HepG2 (cell line): ENCODE measurements at regions of chr11 and their contacts with region 1.

Region 1: DNA sequence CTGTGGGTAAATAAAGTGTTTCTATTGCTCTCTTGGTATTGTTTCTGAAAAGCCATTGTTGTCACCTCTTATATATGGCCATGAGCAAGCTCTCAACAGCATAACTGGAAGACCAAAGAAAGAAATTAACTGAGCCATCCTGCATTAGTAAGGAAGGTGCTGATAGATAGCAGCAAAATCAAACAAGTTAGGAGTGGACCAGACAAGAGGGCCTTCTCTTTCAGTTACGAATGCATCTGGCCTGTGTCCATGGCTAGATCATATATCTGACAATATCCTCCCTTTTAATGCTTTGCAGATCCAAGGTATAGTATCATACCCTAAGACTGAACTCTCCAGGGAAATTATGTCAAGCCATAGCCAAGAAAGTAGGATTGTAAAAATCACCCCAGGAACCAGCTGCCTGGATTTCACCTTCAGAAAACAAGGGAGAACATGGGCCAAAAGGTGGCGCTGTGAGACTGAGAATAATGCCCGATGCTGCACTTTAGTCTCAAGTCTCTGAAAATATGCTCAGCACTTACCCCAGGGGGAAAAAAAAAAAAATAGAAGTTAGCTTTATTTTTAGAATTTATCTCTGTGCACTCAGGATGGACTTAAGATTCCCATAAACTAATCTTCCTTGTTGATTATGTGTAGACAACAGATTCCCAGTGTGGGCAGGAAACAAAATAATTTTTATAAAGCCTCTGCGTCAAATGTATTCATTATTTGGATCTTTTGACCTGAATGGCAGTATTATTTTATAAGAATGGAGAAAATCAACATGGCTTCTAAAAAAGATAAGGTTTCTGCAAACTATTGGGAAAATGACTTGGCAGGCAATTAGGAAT is 415.1 kb downstream of the ETS1 start:
- DNase-seq: peak; percentile 46
- ATAC-seq: peak; percentile 80
- H3K4me3 ChIP-seq: no peak overlapping the region
- H3K27ac ChIP-seq: no peak overlapping the region
- H3K4me1 ChIP-seq: no peaks in the 10 kb centered on the region
- H3K27me3 ChIP-seq: no peaks in the 10 kb centered on the region
- CTCF ChIP-seq: peak; percentile 79
- EP300 ChIP-seq: no peak
- POLR2A ChIP-seq: no peak
- RAD21 ChIP-seq: peak; percentile 41; the same call in 1 of the 2 replicates

Region 2: DNA sequence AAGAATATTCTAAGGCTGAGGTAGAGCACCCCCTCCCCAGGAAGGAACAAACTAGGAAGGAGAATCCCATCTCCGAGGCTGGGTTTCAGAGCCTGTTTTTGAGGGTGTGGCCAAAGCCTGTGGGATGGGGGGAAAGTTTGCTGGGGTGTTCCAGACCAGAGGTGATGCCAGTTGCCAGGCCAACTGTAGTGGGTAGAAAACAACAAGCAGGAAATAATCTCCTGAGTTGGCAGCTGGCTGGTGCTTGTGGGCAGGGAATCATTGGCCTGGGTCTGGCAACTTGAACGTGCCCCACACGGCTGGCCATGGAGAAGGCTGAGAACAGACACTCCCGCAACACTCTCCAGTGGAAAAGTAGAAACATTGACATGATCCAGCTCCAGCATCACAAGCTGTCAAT is 29.5 kb after region 1 on chr11:
- CTCF ChIA-PET with region 1: no interaction called
- POLR2A ChIA-PET with region 1: no interaction called
- in situ Hi-C with region 1: no loop called
- intact Hi-C with region 1: no loop called
- DNase-seq: no peak
- ATAC-seq: no peak
- H3K4me3 ChIP-seq: no peak overlapping the region
- H3K27ac ChIP-seq: no peak overlapping the region
- H3K4me1 ChIP-seq: no peaks in the 10 kb centered on the region
- H3K27me3 ChIP-seq: no peaks in the 10 kb centered on the region
- CTCF ChIP-seq: no peak
- EP300 ChIP-seq: no peak
- POLR2A ChIP-seq: no peak
- RAD21 ChIP-seq: no peak

Region 3: DNA sequence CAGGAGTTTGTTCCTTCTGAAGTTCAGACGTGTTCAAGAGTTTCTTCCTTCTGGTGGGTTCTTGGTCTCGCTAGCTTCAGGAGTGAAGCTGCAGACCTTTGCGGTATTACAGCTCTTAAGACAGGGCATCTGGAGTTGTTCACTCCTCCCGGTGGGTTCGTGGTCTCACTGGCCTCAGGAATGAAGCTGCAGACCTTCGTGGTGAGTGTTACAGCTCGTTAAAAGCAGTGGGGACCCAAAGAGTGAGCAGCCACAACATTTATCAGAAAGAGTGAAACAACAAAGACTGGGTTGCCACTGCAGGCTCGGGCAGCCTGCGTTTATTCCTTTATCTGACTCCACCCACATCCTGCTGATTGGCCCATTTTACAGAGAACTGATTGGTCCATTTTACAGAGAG is 42.0 kb after region 1 on chr11:
- CTCF ChIA-PET with region 1: no interaction called
- POLR2A ChIA-PET with region 1: no interaction called
- in situ Hi-C with region 1: no loop called
- intact Hi-C with region 1: no loop called
- DNase-seq: no peak
- ATAC-seq: no peak
- H3K4me3 ChIP-seq: no peak overlapping the region
- H3K27ac ChIP-seq: no peak overlapping the region
- H3K4me1 ChIP-seq: no peaks in the 10 kb centered on the region
- H3K27me3 ChIP-seq: no peaks in the 10 kb centered on the region
- CTCF ChIP-seq: no peak
- EP300 ChIP-seq: no peak
- POLR2A ChIP-seq: no peak
- RAD21 ChIP-seq: no peak

Region 4: DNA sequence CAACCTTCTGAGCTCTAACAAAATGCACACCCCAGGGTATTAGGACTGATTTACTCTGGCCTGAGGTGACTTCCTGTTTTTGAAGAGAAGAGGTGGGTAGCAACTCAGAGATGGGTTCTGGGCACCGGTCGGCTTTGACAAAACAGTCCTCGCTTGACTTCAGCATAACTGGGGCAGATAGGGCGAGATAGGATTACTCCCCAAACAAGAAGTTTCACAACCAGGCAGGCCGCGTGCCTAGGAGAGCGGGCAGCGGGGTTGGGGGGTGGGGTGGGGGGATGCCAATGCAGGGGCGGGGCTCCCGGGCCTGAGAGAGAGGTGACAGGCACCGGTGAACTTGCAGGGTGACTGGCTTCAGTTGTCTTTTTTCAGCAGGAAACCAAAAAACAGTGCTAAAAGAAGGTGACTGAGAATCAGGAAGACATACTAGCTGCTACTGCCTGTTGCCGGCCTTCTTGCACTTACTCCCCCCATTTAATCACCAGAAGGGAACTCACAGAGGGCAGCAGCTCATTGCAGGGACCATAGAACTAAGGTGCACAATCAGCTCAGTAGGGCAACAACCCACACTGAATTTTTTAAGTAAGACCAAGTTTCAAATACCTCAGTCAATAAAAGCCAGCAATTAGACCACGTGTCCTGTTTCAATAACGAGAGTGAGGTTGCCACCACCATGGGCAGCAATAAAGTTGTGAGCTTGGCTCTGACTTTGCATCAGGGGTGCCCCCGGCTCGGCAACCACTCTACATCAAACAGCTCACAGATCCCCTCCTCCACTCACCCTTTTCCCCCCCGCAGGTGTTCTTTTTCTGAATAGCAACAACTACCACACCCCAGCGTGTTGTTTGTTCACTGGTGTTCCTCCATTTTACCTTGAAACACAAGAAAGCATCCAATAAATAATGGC is 452.3 kb after region 1 on chr11:
- CTCF ChIA-PET with region 1: interaction called, 15 read pairs
- POLR2A ChIA-PET with region 1: no interaction called
- in situ Hi-C with region 1: loop called (anchors 5 kb)
- intact Hi-C with region 1: no loop called
- DNase-seq: no peak
- ATAC-seq: no peak
- H3K4me3 ChIP-seq: no peak overlapping the region
- H3K27ac ChIP-seq: no peak overlapping the region
- H3K4me1 ChIP-seq: no peaks in the 10 kb centered on the region
- H3K27me3 ChIP-seq: peaks cover under 1 to 56% of the 10 kb centered on the region in 2 experiments; a peak in 4 of 5 replicates
- CTCF ChIP-seq: no peak
- EP300 ChIP-seq: no peak
- POLR2A ChIP-seq: no peak
- RAD21 ChIP-seq: no peak

Region 5: GRCh38 chr11:128859563-128860441 is 687.5 kb after region 1 on chr11:
- CTCF ChIA-PET with region 1: interaction called, 4 read pairs
- POLR2A ChIA-PET with region 1: no interaction called
- in situ Hi-C with region 1: no loop called
- intact Hi-C with region 1: loop called (anchors 1 kb)
- DNase-seq: peak; percentile 35
- ATAC-seq: peak; percentile 94
- H3K4me3 ChIP-seq: no peak overlapping the region
- H3K27ac ChIP-seq: no peak overlapping the region
- H3K4me1 ChIP-seq: no peaks in the 10 kb centered on the region
- H3K27me3 ChIP-seq: peaks cover 5 to 51% of the 10 kb centered on the region in 2 experiments; a peak in 4 of 5 replicates
- CTCF ChIP-seq: peak; percentile 85
- EP300 ChIP-seq: no peak
- POLR2A ChIP-seq: no peak
- RAD21 ChIP-seq: peak; percentile 55; the same call in 1 of the 2 replicates

Region 6: GRCh38 chr11:128956401-128957201 is 784.3 kb after region 1 on chr11:
- CTCF ChIA-PET with region 1: no interaction called
- POLR2A ChIA-PET with region 1: no interaction called
- in situ Hi-C with region 1: no loop called
- intact Hi-C with region 1: loop called (anchors 10 kb)
- DNase-seq: peak; percentile 74
- ATAC-seq: peak; percentile 91
- H3K4me3 ChIP-seq: no peak overlapping the region
- H3K27ac ChIP-seq: no peak overlapping the region
- H3K4me1 ChIP-seq: no peaks in the 10 kb centered on the region
- H3K27me3 ChIP-seq: no peaks in the 10 kb centered on the region
- CTCF ChIP-seq: peak; percentile 82
- EP300 ChIP-seq: no peak
- POLR2A ChIP-seq: no peak
- RAD21 ChIP-seq: peak; percentile 62; the same call in 1 of the 2 replicates